Prostate gland (tissue), 2 donors: ENCODE measurements at regions of chr12 and their contacts with region 1.

Region 1: GRCh38 chr12:54958048-54958658 is 26.4 kb downstream of the TESPA1 start:
- DNase-seq: peak; percentile 48
- H3K4me3 ChIP-seq: no peak overlapping the region
- H3K27ac ChIP-seq: no peak overlapping the region
- H3K4me1 ChIP-seq: no peaks in the 10 kb centered on the region
- H3K27me3 ChIP-seq: no peaks in the 10 kb centered on the region
- CTCF ChIP-seq: peak; percentile 20 to 81 (median 76)
- POLR2A ChIP-seq: no peak

Region 2: GRCh38 chr12:54579696-54580333 is 378.3 kb before region 1 on chr12:
- intact Hi-C with region 1: loop called (anchors 5 kb)
- DNase-seq: peak; percentile 69
- H3K4me3 ChIP-seq: no peak overlapping the region
- H3K27ac ChIP-seq: no peak overlapping the region
- H3K4me1 ChIP-seq: no peaks in the 10 kb centered on the region
- H3K27me3 ChIP-seq: no peaks in the 10 kb centered on the region
- CTCF ChIP-seq: peak; percentile 90 to 98 (median 94)
- POLR2A ChIP-seq: no peak

Region 3: GRCh38 chr12:54596526-54596946 is 361.6 kb before region 1 on chr12:
- intact Hi-C with region 1: loop called (anchors 5 kb)
- DNase-seq: peak; percentile 60
- H3K4me3 ChIP-seq: no peak overlapping the region
- H3K27ac ChIP-seq: no peak overlapping the region
- H3K4me1 ChIP-seq: no peaks in the 10 kb centered on the region
- H3K27me3 ChIP-seq: no peaks in the 10 kb centered on the region
- CTCF ChIP-seq: peak; percentile 61 to 72 (median 67)
- POLR2A ChIP-seq: no peak

Region 4: DNA sequence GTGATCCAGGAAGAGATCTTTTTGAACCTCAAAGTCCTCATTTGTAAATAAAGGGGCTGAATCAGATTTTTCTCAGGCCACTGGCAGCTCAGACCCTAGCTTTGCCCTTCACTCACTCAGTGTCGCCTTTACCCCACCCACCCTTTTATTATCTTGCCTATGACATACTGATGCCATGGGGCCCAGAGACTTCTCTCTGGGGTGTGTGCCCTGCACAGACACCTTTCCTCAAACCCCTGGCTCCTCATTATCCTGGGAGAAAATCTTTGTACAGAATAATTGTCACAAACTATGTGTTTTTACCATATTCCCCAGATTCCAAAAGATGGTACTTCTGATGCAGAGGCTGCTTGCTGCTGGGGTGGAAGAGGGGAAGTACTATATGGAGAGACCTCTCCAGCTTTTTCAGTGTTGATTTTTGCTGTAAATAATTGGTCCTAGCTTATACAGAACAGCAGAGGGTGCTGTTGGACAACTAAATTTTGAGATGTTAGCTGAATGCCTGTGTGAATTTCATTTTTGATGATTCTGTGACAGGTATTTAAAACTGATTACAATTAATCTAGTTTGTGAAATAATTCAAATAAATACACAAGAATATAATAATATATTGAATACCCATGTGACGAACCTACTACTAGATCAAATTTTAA is 256.1 kb before region 1 on chr12:
- intact Hi-C with region 1: loop called (anchors 5 kb)
- DNase-seq: peak; percentile 13
- H3K4me3 ChIP-seq: no peak overlapping the region
- H3K27ac ChIP-seq: no peak overlapping the region
- H3K4me1 ChIP-seq: no peaks in the 10 kb centered on the region
- H3K27me3 ChIP-seq: no peaks in the 10 kb centered on the region
- CTCF ChIP-seq: peak in 3 of 4 experiments; percentile 49 to 73 (median 68)
- POLR2A ChIP-seq: no peak

Region 5: GRCh38 chr12:54749191-54749818 is 208.8 kb before region 1 on chr12:
- intact Hi-C with region 1: loop called (anchors 5 kb)
- DNase-seq: peak; percentile 23
- H3K4me3 ChIP-seq: no peak overlapping the region
- H3K27ac ChIP-seq: no peak overlapping the region
- H3K4me1 ChIP-seq: no peaks in the 10 kb centered on the region
- H3K27me3 ChIP-seq: no peaks in the 10 kb centered on the region
- CTCF ChIP-seq: peak; percentile 31 to 85 (median 74)
- POLR2A ChIP-seq: no peak

Region 6: GRCh38 chr12:54849441-54849840 is 108.7 kb before region 1 on chr12:
- intact Hi-C with region 1: no loop called
- DNase-seq: no peak
- H3K4me3 ChIP-seq: no peak overlapping the region
- H3K27ac ChIP-seq: no peak overlapping the region
- H3K4me1 ChIP-seq: no peaks in the 10 kb centered on the region
- H3K27me3 ChIP-seq: no peaks in the 10 kb centered on the region
- CTCF ChIP-seq: no peak
- POLR2A ChIP-seq: no peak